ENCODE measurements at regions of chr11 and their contacts with region 1.

Region 1: DNA sequence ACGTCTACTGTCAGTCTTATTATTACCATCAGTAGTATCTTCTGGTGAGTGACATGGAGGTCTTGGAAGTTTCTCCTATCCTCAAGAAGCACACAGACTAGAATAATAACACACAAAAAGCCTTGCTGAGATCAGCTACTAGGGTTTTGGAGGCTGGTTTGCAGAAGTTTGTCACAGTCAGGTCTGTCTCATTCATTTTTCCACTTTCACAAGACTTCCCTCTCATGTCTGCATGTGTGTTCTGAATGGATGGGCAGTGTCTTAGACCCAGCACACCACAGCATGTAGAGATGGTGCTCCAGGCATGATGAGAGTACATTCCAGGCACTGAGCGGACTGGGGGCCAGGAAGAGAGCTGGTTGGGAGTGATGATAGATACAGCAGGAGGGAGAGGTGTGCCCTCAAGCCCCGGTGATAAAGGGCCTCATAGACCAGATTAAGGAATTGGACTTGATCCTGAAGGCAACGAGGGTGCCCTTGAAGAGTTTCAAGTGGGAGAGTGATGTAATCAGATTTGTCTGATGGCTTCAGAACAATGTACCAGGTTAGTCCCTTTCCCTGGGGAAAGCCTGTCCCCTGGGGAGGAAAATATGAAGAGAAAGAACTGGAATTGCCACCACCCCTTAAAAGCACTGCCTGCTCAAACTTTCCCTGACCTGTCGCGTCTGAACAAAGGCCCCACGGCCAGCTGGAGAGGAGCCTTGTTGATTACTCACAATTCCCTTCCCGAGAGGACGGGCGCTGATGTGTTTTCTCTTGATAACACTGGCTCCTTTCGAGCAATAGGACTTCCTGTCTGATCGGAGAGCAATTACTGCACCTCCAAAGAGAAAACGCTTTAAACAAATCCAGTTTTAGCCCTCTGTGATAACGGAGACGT is 45.1 kb upstream of the LMO2 start:
- DNase-seq: peak; percentile 72
- ATAC-seq: peak; percentile 73

Region 2: GRCh38 chr11:33869481-33870422 is 67.2 kb before region 1 on chr11:
- intact Hi-C with region 1: loop called (anchors 1 kb)
- DNase-seq: peak; percentile 81
- ATAC-seq: peak; percentile 74

Measured in Right ventricle myocardium inferior (tissue), 1 donor.